Ovary (tissue), 10 donors: ENCODE measurements at regions of chr11 and their contacts with region 1.

Region 1: DNA sequence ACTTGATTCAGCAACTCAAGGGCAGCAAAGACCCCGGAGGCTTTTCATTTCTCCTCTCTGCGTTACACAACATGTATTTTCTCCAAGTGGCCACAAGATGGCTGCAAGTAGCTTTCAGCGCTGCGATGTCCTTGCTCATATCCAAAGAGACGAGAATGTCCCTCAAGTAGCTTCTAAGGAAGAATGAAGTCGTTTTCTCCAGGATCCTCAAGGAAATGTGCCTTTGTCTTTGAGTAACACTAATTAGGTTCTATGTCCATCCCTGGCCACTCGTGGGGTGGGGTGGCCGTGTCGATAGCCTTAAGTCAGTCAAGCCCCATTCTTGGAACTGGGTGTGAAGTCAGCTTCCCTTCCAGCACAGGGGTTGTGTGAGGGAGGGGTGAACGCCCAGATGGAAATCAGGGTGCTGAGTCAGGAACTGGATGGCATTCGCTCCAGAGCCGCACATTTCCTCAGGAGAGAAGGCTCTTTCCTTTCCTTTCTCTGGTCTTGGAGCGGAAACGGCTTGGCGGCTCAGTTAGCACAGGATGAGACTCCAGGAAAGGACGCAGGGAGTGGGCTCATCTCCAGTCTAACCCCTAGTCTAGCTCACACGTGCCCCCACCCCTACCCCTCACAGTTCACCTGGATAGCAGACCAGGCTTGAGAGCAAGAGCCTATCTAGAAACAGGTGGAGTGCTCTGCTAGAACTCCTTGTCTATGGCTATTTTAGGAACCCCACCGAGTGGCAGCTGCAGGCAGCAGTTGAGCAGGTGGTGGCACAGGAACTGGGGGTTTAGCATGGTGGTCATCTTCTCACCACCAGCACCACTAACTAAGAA is 44.3 kb downstream of the NNMT start:
- DNase-seq: peak; percentile 26 to 45 (median 36)
- H3K4me3 ChIP-seq: no peak overlapping the region
- H3K27ac ChIP-seq: no peak overlapping the region
- H3K4me1 ChIP-seq: peaks cover 3% of the 10 kb centered on the region
- H3K27me3 ChIP-seq: no peaks in the 10 kb centered on the region
- CTCF ChIP-seq: peak; percentile 74 to 84 (median 75)
- EP300 ChIP-seq: no peak
- POLR2A ChIP-seq: no peak

Region 2: DNA sequence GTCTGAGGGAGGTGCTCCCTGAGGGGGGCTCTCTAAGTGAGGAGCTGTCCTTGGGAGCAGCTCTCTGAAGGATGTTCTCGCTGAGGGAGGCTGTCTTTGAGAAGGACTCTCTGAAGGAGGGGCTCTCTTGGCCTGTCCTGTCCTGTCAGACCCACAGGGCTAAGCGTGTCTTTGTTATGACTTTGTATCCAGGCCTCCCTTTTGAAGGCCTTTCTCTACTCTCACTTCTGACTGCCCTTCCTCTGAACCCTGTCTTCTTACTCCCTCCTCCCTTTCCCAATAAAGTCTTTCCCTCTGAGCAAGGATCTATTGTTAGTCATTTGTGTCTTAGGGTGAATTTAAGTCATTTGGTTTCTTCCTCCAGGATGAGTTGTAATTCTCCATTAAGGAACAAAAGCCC is 1749.8 kb before region 1 on chr11:
- intact Hi-C with region 1: no loop called
- DNase-seq: no peak
- H3K4me3 ChIP-seq: no peak overlapping the region
- H3K27ac ChIP-seq: no peak overlapping the region
- H3K4me1 ChIP-seq: peaks cover 3% of the 10 kb centered on the region
- H3K27me3 ChIP-seq: no peaks in the 10 kb centered on the region
- CTCF ChIP-seq: no peak
- EP300 ChIP-seq: no peak
- POLR2A ChIP-seq: no peak

Region 3: DNA sequence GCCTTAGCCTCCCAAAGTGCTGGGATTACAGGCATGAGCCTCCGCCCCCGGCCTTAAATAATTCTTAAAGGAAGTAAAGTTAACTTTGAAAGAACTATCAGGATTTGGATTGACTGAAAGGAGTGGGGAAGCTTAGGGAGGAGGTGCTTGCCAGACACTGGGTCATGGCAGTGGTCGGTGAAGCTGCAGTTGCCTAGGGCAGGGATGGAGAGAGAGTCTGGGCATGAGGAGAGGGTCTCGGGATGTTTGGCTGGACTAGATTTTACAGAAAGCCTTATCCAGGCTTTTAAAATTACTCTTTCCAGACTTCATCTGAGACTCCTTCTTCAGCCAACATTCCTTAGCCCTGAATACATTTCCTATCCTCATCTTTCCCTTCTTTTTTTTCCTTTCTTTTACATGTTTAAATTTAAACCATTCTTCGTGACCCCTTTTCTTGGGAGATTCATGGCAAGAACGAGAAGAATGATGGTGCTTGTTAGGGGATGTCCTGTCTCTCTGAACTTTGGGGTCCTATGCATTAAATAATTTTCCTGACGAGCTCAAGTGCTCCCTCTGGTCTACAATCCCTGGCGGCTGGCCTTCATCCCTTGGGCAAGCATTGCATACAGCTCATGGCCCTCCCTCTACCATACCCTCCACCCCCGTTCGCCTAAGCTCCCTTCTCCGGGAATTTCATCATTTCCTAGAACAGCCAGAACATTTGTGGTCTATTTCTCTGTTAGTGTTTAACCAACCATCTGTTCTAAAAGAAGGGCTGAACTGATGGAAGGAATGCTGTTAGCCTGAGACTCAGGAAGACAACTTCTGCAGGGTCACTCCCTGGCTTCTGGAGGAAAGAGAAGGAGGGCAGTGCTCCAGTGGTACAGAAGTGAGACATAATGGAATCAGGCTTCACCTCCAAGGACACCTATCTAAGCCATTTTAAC is 44.6 kb before region 1 on chr11 and contains the start of gene NNMT:
- intact Hi-C with region 1: no loop called
- DNase-seq: peak; percentile 36 to 77 (median 47)
- H3K4me3 ChIP-seq: peak within 1 kb of the TSS; percentile 36
- H3K27ac ChIP-seq: peak within 1 kb of the TSS; percentile 63 to 75
- H3K4me1 ChIP-seq: peaks cover 9% of the 10 kb centered on the region
- H3K27me3 ChIP-seq: no peaks in the 10 kb centered on the region
- CTCF ChIP-seq: no peak
- EP300 ChIP-seq: peak; percentile 97
- POLR2A ChIP-seq: peak; percentile 28
- total RNA-seq, gene NNMT: 9.5 to 295 (median 129) TPM

Region 4: GRCh38 chr11:114762408-114762807 is 421.9 kb after region 1 on chr11:
- intact Hi-C with region 1: loop called in 1 of 4 experiments (anchors 2 kb)
- DNase-seq: peak; percentile 27 to 76 (median 44)
- H3K4me3 ChIP-seq: no peak overlapping the region
- H3K27ac ChIP-seq: no peak overlapping the region
- H3K4me1 ChIP-seq: no peaks in the 10 kb centered on the region
- H3K27me3 ChIP-seq: no peaks in the 10 kb centered on the region
- CTCF ChIP-seq: peak in 1 of 3 donors; percentile 16
- EP300 ChIP-seq: no peak
- POLR2A ChIP-seq: no peak